ENCODE measurements at regions of chr9 and their contacts with region 1.

Region 1: DNA sequence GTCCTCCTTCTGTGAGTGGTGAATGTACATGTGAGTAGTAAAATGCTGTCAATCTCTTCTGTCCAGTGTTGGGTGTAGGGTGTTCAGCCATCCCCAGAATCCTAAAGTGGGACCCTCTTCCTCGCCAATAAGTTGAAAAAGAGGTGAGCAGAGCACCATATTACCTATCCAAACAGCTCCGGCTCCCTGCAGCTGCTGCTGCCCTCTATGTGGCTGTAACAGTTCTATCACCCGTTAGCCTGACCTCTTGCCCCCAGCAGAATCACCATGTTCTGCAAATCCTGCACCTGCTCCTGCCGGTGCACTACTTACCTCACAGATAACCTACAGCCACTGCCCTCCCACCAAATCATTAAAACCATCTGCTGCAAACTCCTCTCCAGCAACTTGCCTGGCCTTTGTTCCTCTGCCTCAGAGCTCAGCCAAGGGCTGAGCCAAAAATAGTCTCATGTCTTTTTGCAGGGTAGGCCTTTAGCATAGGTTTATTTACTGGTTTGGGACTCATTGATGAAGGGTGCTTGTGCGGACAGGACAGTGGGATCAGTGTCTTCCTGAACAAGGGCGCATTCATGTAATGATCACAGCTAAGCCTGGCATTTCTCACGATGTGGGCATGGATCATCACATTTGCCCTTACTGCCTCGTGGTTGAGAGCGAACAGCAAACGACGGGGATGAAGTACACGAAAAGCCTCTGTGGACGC is 49.6 kb upstream of the CCL21 start:
- DNase-seq: no peak
- ATAC-seq: peak in 4 of 8 donors; percentile 53 to 72 (median 60)
- H3K4me3 ChIP-seq: no peak overlapping the region
- H3K27ac ChIP-seq: no peak overlapping the region
- H3K4me1 ChIP-seq: peaks cover 0 to 5% (median 0%) of the 10 kb centered on the region in 9 donors
- H3K27me3 ChIP-seq: peaks cover 0 to 8% (median 0%) of the 10 kb centered on the region in 7 donors
- CTCF ChIP-seq: no peak

Region 2: DNA sequence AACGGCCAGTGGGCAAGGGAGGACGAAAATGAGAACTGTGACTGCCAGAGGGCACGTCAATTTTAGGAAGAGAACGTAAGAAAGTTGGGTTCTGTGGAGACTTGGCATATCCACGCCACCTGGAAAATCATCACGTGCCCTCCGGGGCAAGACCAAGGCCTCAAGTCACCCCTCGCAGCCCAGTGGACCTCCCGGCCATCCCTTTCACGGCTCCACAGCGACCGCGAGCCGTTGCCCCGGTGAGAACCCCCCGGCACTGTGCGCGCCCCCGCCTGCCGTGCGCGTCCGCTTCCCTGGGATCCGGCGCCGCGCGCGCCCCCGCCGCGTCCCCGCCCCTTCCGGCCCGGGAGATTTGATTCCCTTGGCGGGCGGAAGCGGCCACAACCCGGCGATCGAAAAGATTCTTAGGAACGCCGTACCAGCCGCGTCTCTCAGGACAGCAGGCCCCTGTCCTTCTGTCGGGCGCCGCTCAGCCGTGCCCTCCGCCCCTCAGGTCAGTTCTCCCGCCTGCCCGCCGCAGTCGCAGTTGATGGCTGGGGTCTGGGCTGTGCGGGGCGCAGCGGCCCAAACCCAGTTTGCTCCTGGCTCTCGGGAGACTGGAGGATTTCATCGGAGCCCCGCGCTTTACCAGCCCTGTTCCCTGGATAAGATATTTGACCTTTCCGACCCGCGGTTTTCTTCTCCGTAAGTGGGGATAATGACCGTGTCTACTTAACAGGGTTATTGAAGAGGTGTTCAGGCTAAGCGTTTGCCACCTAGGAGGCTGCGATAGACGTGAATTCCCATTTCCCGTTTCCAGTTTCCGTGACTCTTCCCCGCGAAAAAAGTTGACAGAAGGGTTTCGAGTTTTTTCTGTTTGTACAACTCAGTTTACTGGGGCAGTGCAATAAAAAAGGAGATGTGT is 1813.2 kb after region 1 on chr9 and contains the start of gene MELK:
- intact Hi-C with region 1: loop called in 1 of 10 experiments (anchors 5 kb)
- DNase-seq: peak; percentile 72 to 84
- ATAC-seq: peak; percentile 95 to 99 (median 97)
- H3K4me3 ChIP-seq: peak within 1 kb of the TSS; percentile 51 to 98 (median 82)
- H3K27ac ChIP-seq: peak within 1 kb of the TSS in 8 of 10 donors; percentile 5 to 89 (median 68)
- H3K4me1 ChIP-seq: peaks cover 0 to 17% (median 12%) of the 10 kb centered on the region in 9 donors
- H3K27me3 ChIP-seq: no peaks in the 10 kb centered on the region
- CTCF ChIP-seq: no peak
- total RNA-seq, gene MELK: 0.16 to 3.1 (median 0.48) TPM in 6 of 10 donors, not detected in the others